ENCODE measurements at regions of chr15 and their contacts with region 1.

Region 1: DNA sequence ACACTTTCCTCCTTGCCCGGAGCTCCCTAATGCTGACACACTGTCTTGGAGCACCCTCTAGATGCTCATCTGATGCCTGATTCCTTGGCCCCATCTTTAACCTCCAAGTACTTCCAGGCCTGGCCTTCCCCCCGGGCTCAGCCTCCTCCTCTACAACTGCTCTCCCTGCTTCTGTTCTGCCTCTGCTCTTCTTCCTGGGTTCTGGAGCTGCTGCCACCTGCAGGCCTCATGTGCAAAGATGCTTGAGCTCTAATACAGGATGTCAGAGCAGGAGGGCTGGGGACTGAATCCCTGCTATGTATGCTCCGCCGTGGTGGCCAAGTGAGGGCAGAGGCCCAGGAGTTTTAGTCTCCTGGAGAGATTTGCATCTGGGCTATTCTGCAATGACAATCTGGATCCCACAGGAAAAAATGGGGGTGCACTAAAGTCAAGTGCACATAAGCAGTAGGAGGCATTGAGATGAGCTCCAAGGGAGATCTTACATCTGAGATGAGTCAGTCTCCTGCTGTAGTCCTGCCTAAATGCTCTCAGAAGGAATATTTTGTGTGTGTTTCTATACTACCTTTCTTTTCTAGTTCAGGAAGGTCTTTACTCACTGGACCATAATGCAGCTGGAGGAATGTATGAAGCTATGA is 296.3 kb downstream of the UACA start:
- DNase-seq: peak; percentile 38
- H3K4me3 ChIP-seq: no peak overlapping the region
- H3K27ac ChIP-seq: no peak overlapping the region
- H3K4me1 ChIP-seq: no peaks in the 10 kb centered on the region
- H3K27me3 ChIP-seq: peaks cover 3 to 6% of the 10 kb centered on the region in 2 experiments
- CTCF ChIP-seq: peak; percentile 46 to 70
- POLR2A ChIP-seq: no peak

Region 2: DNA sequence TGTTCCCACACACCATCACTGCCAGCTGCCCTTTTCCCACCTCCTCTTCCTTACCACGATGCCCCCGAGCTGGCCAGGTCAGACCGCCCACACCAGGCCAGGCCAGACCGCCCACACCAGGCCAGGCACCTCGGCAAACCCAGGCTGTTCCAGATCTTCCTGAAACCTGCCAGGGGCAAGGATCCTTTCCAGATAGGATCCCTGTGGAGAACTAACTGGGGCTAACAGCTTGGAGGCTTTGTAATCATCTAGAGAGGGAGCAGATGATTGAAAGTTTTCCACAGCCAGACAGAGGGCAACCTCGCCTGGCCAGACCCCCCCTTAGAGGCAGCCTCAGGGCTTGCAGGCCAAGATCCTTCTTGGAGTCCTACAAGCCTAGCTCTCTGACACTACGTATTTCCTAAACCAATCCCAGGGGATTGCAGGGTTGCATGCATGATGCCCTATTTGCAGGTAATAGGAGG is 81.9 kb before region 1 on chr15:
- CTCF ChIA-PET with region 1: no interaction called
- POLR2A ChIA-PET with region 1: no interaction called
- dilution Hi-C with region 1: no loop called
- intact Hi-C with region 1: no loop called
- DNase-seq: no peak
- H3K4me3 ChIP-seq: no peak overlapping the region
- H3K27ac ChIP-seq: no peak overlapping the region
- H3K4me1 ChIP-seq: no peaks in the 10 kb centered on the region
- H3K27me3 ChIP-seq: peaks cover 3 to 4% of the 10 kb centered on the region in 2 experiments
- CTCF ChIP-seq: no peak
- POLR2A ChIP-seq: no peak

Region 3: DNA sequence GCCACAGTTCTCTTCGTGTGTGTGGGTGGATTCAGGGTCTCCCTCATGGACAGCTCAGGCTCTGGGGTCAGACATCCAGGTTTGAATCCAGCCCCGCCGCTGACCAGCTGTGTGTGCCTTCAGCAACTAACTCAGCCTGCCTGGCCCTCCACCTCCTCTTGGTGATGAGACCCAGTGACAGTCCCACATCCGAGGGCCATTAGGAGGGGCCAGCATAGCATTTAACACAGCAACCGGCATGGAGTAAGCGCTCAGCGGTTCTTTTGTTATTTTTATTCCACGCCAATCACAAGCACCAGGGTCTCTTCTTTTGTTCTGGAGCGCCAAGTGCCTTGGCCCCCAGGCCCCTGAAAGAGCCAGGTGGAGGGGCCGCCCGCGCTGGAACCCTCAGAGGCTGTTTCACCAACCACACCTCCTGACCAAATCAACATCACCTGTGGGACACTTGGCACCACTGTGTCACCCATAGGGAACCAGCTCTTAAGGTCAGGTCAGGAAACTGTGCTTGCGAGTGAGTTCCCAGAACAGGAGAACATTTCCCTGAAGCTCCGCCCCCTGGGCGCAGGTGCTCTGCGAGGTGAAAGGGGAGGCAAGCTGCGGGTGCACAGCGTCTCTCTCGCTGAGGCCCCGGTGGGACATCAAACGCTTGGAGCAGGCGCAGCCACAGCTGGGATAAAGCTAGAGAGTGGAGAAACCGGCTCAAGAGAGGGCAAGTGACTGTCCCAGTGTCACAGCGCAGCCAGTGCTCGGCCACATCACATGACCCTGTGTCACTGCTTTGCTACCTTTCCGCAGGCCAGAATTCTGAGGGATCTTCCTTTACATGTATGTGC is 15.0 kb before region 1 on chr15:
- CTCF ChIA-PET with region 1: interaction called, 18 read pairs
- POLR2A ChIA-PET with region 1: no interaction called
- dilution Hi-C with region 1: no loop called
- intact Hi-C with region 1: no loop called
- DNase-seq: no peak
- H3K4me3 ChIP-seq: no peak overlapping the region
- H3K27ac ChIP-seq: no peak overlapping the region
- H3K4me1 ChIP-seq: no peaks in the 10 kb centered on the region
- H3K27me3 ChIP-seq: peaks cover 6 to 7% of the 10 kb centered on the region in 2 experiments
- CTCF ChIP-seq: no peak
- POLR2A ChIP-seq: no peak

Measured in endothelial cell of umbilical vein (primary cell).